Activated CD4-positive, alpha-beta T cell treated with anti-CD3 and anti-CD28 coated beads for 36 hours (primary cell): ENCODE measurements at regions of chrX and their contacts with region 1.

Region 1: DNA sequence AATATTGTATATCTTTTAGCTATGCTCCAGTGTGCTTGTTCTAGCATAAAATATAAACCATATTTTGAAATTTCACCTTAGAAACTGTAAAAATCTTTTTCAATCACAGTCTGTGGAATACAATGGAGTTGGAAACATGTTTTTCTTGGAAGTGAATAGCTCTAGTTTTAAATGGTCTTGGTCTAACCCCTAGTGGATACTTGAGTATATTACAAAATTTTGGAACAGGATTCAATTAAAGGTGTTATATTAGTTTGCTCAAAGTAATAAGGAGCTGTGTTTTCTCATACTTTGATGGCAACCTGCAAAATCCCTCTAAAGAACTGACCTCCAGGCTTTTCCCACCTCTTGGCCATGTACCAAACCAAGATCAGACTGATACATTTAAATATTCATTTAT is 48.2 kb downstream of the STK26 start:
- DNase-seq: no peak
- ATAC-seq: no peak
- H3K4me3 Mint-ChIP-seq: no peak overlapping the region
- H3K27ac Mint-ChIP-seq: no peak overlapping the region
- H3K4me1 Mint-ChIP-seq: no peaks in the 10 kb centered on the region
- H3K27me3 Mint-ChIP-seq: no peaks in the 10 kb centered on the region

Region 2: GRCh38 chrX:131441032-131441431 is 630.2 kb before region 1 on chrX:
- CTCF ChIA-PET with region 1: no interaction called
- POLR2A ChIA-PET with region 1: no interaction called
- intact Hi-C with region 1: no loop called
- DNase-seq: no peak
- ATAC-seq: no peak
- H3K4me3 Mint-ChIP-seq: no peak overlapping the region
- H3K27ac Mint-ChIP-seq: no peak overlapping the region
- H3K4me1 Mint-ChIP-seq: no peaks in the 10 kb centered on the region
- H3K27me3 Mint-ChIP-seq: no peaks in the 10 kb centered on the region

Region 3: GRCh38 chrX:131841496-131842410 is 229.5 kb before region 1 on chrX:
- CTCF ChIA-PET with region 1: interaction called, 8 read pairs
- POLR2A ChIA-PET with region 1: no interaction called
- intact Hi-C with region 1: loop called in 1 of 2 experiments (anchors 5 kb)
- DNase-seq: peak; percentile 36
- ATAC-seq: peak; percentile 75
- H3K4me3 Mint-ChIP-seq: no peak overlapping the region
- H3K27ac Mint-ChIP-seq: no peak overlapping the region
- H3K4me1 Mint-ChIP-seq: peaks cover 6% of the 10 kb centered on the region
- H3K27me3 Mint-ChIP-seq: no peaks in the 10 kb centered on the region